ENCODE measurements at regions of chr12 and their contacts with region 1.

Region 1: GRCh38 chr12:66624806-66625205 is 54.1 kb downstream of the GRIP1 start:
- DNase-seq: no peak
- H3K4me3 ChIP-seq: no peak overlapping the region
- H3K27ac ChIP-seq: no peak overlapping the region
- H3K4me1 ChIP-seq: no peaks in the 10 kb centered on the region
- H3K27me3 ChIP-seq: peaks cover 43% of the 10 kb centered on the region
- CTCF ChIP-seq: no peak

Region 2: DNA sequence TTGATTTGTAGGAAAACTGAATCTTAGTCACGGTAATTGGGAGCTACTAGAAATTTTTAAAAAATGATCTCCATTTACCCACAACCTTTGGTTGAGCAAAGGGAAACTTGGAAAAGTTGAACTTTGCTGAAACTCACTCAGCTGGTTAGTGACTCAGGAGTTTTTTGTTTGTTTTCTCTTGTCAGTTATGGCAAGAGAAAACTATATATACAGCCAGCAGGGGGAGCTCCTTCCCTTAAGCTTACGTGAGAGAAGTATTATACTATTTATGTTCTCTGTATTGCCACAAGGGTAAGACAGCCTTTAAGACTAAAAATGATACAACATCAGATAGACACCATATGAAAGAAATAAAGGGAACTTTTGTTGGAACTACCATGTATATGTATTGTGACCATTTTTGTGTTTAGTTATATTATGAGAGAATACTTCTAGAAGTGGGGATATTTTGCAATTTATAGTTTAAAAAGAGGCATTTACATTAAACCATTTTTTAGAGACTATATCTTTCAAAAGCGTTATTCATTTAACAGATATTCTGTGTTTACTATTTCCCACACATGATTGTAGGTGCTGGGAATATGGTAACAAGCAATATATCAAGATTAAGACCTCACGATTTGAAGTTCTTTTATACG is 1828.5 kb before region 1 on chr12:
- CTCF ChIA-PET with region 1: no interaction called
- POLR2A ChIA-PET with region 1: interaction called, 13 read pairs
- intact Hi-C with region 1: no loop called
- DNase-seq: peak; percentile 90
- H3K4me3 ChIP-seq: no peak overlapping the region
- H3K27ac ChIP-seq: no peak overlapping the region
- H3K4me1 ChIP-seq: no peaks in the 10 kb centered on the region
- H3K27me3 ChIP-seq: no peaks in the 10 kb centered on the region
- CTCF ChIP-seq: peak; percentile 90

Region 3: DNA sequence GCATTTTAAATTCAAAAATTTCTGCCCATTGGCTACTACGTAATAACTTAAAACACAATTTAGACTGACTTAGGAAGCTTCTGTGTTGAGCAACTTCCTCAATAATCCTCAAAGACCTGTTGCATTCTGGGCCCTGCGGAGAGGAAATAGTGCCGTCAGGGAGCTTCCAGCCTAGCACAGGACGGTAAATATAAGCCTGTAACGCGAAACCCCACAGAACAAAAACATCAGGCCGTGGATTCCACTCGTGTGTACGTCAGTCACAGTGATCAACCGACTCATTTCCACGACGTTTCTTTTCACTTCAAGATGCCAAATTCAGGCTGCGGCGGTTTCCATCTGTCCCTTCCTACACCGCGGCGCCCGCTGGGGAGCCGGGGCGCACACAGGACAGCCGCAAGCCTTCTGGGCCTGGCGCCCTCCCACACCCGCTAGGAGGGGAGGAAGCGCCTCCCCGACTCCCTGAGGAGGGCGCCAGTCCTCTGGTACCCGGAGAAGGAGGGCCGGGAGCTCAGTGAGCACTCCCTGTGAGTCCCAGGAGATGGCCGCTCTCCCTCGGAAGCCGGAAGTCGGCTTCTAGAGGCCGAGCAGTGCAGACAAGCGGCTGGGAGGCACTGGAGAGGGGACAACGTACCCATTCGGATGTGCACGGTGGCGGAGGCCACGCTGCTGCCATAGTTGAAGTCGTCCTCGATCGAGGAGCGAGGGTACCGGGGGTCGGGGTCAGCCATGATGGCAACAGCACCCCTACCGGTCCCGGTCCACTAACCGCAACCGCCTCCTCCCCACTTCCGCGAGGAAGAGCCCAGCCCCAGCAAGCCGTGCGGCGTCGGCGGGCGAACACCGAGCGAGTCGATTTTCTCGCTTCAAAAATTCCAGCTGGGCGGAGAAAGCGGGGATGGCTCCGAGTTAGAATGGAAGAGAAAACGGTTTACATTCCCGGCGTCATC is 455.3 kb before region 1 on chr12 and contains the start of gene TMBIM4:
- CTCF ChIA-PET with region 1: no interaction called
- POLR2A ChIA-PET with region 1: interaction called, 10 read pairs
- intact Hi-C with region 1: no loop called
- DNase-seq: peak; percentile 98
- H3K4me3 ChIP-seq: peak within 1 kb of the TSS; percentile 71
- H3K27ac ChIP-seq: peak within 1 kb of the TSS; percentile 97
- H3K4me1 ChIP-seq: peaks cover 9% of the 10 kb centered on the region
- H3K27me3 ChIP-seq: no peaks in the 10 kb centered on the region
- CTCF ChIP-seq: peak; percentile 58
- total RNA-seq, gene TMBIM4: 61.8 and 62.1 TPM in 2 replicates